ENCODE measurements at regions of chr9 and their contacts with region 1.

Region 1: GRCh38 chr9:21688108-21689102 is 114.0 kb upstream of the MTAP start:
- DNase-seq: peak; percentile 51 to 87
- ATAC-seq: peak; percentile 51 to 66; a peak in 5 of 6 replicates
- H3K4me3 ChIP-seq: peak overlapping the region; percentile 31
- H3K27ac ChIP-seq: peak overlapping the region; percentile 92 to 94
- H3K4me1 ChIP-seq: peaks cover 67% of the 10 kb centered on the region
- CTCF ChIP-seq: no peak
- EP300 ChIP-seq: no peak
- POLR2A ChIP-seq: no peak
- RAD21 ChIP-seq: no peak

Region 2: DNA sequence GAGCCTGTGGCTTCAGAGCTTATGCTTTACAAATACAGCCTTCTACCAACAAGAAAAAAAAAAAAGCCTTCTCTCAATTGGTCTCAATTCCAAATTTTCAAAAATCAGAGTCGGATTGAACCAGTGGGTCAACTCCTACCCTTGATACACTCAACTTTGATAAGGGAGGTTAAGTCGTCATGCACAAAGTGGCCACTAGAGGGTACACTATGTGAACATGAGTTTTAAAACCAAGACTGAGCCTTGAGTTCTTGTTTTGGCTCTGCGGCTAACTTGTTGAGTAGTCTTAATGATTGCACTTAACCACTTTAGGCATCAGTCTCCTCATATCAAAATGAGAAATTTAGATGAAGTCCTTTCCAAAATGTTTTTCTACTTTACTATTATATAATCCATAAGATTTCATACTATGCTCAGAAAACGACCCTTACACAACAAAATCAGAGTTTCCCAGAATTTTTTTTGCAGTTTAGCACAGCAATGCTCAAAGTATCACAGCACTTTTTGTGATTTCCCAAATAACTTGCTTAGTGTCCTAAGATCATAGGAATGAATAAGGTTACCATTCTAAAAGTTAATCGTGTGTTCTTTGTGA is 21.2 kb after region 1 on chr9:
- CTCF ChIA-PET with region 1: interaction called, 17 read pairs
- POLR2A ChIA-PET with region 1: no interaction called
- DNase-seq: peak; percentile 36 to 74
- ATAC-seq: peak; percentile 66 to 85; a peak in 4 of 6 replicates
- H3K4me3 ChIP-seq: no peak overlapping the region
- H3K27ac ChIP-seq: peak overlapping the region in 1 of 2 experiments; percentile 64; a peak in 2 of 6 replicates
- H3K4me1 ChIP-seq: peaks cover 18% of the 10 kb centered on the region; the same call in 2 of the 3 replicates
- CTCF ChIP-seq: peak; percentile 74
- EP300 ChIP-seq: no peak
- POLR2A ChIP-seq: no peak
- RAD21 ChIP-seq: peak; percentile 50 to 55